Posterior vena cava (tissue), 2 donors: ENCODE measurements at regions of chr4 and their contacts with region 1.

Region 1: DNA sequence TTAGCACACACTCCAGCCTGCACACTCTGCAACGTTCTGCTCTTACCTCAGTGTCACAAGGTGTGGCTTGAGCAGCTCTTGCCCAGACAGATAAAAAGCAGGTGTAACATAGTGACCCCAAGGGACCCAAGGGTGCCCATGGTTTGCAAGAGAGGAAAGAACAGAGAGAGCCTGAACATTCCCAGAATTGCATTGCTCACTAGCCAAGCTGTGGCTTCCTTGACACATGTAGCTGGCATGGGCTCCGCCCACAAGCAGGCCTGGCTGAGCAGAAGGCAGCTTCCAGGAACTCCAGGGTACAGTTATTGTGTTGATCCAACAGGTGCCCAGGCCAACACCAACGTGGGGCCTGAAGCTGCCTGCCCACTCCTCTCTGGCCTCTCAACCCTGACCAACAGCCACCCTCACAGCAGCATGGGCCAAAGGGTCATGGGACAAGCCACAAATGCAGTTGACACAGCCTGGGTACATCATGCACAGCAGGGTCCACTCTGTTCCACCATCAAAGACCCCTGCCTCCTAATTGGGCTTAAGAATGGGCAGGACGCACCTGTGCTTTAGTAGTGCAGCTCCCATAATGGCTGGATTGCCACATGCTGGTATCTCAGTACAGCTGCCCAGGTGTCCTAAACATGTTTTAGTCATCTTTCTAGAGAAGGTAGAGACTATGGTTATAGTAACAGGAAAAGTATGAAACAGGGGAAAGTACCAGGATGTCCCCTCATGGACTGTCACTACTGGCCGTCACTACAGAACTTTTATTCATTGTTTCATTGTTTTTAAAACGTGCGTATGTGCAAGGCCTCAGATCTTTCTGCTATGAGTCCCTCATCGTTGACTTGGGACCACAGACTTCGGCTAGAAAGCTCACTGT is 73.7 kb upstream of the ACSL1 start:
- DNase-seq: no peak

Region 2: DNA sequence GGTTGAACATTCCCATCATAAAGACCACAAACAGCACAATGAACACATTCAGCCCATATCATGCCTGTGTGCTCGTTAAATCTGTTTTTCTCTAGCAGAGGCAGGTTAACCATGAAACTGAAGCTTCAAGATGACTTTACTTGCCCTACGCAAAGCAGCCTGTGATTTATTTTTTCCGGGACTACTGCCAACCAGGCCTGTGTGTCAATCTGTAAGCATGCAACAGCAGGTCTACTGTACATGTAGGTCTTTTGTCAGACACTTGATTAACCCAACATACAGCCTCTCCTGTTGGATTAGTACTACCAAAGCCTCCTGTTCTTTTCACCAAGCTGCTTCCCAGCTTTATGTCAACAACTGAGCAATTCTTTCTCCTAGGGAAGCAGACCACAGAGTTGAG is 11.8 kb after region 1 on chr4:
- intact Hi-C with region 1: loop called in 1 of 2 experiments (anchors 1 kb)
- DNase-seq: no peak